T-cell (primary cell): ENCODE measurements at regions of chr18 and their contacts with region 1.

Region 1: GRCh38 chr18:54904571-54904970 is 54.7 kb downstream of the CCDC68 start:
- DNase-seq: no peak
- ATAC-seq: no peak
- H3K4me3 ChIP-seq: no peak overlapping the region
- H3K4me3 Mint-ChIP-seq: no peak overlapping the region
- H3K27ac ChIP-seq: no peak overlapping the region
- H3K27ac Mint-ChIP-seq: no peak overlapping the region
- H3K4me1 ChIP-seq: no peaks in the 10 kb centered on the region
- H3K4me1 Mint-ChIP-seq: no peaks in the 10 kb centered on the region
- H3K27me3 ChIP-seq: peaks cover 0 to 4% of the 10 kb centered on the region in 2 experiments
- H3K27me3 Mint-ChIP-seq: peaks cover 0 to 8% of the 10 kb centered on the region in 2 donors

Region 2: GRCh38 chr18:54952026-54952425 is 47.5 kb after region 1 on chr18:
- CTCF ChIA-PET with region 1: interaction called in 1 of 2 experiments, 11 read pairs
- POLR2A ChIA-PET with region 1: no interaction called
- DNase-seq: no peak
- ATAC-seq: no peak
- H3K4me3 ChIP-seq: no peak overlapping the region
- H3K4me3 Mint-ChIP-seq: no peak overlapping the region
- H3K27ac ChIP-seq: no peak overlapping the region
- H3K27ac Mint-ChIP-seq: no peak overlapping the region
- H3K4me1 ChIP-seq: no peaks in the 10 kb centered on the region
- H3K4me1 Mint-ChIP-seq: peaks cover 2 to 5% (median 2%) of the 10 kb centered on the region in 3 donors
- H3K27me3 ChIP-seq: no peaks in the 10 kb centered on the region
- H3K27me3 Mint-ChIP-seq: peaks cover 13% of the 10 kb centered on the region in 2 donors

Region 3: GRCh38 chr18:55069497-55069896 is 164.9 kb after region 1 on chr18:
- CTCF ChIA-PET with region 1: no interaction called
- POLR2A ChIA-PET with region 1: no interaction called
- DNase-seq: peak in 1 of 35 experiments; percentile 3
- ATAC-seq: no peak
- H3K4me3 ChIP-seq: no peak overlapping the region
- H3K4me3 Mint-ChIP-seq: no peak overlapping the region
- H3K27ac ChIP-seq: no peak overlapping the region
- H3K27ac Mint-ChIP-seq: no peak overlapping the region
- H3K4me1 ChIP-seq: no peaks in the 10 kb centered on the region
- H3K4me1 Mint-ChIP-seq: peaks cover 0 to 2% (median 0%) of the 10 kb centered on the region in 3 donors
- H3K27me3 ChIP-seq: peaks cover 0 to 4% of the 10 kb centered on the region in 2 experiments
- H3K27me3 Mint-ChIP-seq: peaks cover 2 to 12% of the 10 kb centered on the region in 2 donors